HEK293 (cell line): ENCODE measurements at regions of chr13 and their contacts with region 1.

Region 1: GRCh38 chr13:75482070-75482819 is at the start of gene TBC1D4:
- H3K4me3 ChIP-seq: peak within 1 kb of the TSS; percentile 70
- H3K27ac ChIP-seq: peak within 1 kb of the TSS; percentile 75; the same call in 1 of the 2 replicates
- H3K4me1 ChIP-seq: no peaks in the 10 kb centered on the region; the same call in 1 of the 2 replicates
- CTCF ChIP-seq: peak; percentile 84

Region 2: DNA sequence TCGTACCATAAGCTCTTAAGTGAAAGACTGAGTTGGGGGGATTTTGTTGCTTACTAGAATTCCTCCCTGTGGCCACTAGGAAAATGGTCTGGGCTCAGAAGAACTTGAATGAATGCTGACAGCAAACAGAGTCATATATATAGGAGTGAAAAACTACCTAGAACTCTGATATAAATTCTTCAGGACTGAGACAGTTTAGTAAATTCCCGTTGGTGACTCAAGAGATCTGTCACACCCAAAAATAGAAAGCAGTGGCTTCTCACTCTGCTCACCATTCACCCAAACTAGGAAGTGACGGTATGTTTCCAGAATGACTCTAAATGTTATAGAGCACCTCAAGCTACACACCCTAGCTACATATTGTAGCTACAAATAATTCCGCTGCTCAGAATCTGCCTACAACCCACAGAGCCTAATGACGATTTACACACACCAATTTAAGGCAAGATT is 116.5 kb before region 1 on chr13:
- CTCF ChIA-PET with region 1: interaction called, 11 read pairs
- POLR2A ChIA-PET with region 1: no interaction called
- H3K4me3 ChIP-seq: no peak overlapping the region
- H3K27ac ChIP-seq: no peak overlapping the region
- H3K4me1 ChIP-seq: no peaks in the 10 kb centered on the region
- CTCF ChIP-seq: no peak

Region 3: DNA sequence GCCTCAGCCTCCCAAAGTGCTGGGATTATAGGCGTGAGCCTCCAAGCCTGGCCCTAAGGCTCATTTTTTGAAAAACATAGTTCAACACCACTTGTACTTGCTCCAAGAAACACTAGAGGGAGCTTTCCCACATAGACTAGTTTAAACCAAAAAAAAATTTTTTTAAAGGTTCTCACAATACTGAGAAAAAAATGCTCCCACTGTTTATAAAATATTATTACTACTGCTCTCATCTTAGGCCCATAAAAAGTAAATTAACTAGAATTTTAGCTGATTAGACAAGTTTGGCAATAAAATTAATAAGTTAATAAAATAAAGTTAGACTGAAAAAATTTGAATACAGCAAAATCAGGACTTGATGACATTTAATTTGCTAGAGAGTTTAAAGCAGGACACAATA is 109.7 kb before region 1 on chr13:
- CTCF ChIA-PET with region 1: interaction called, 14 read pairs
- POLR2A ChIA-PET with region 1: no interaction called
- H3K4me3 ChIP-seq: no peak overlapping the region
- H3K27ac ChIP-seq: no peak overlapping the region
- H3K4me1 ChIP-seq: no peaks in the 10 kb centered on the region
- CTCF ChIP-seq: no peak